A673 (cell line): ENCODE measurements at regions of chr11 and their contacts with region 1.

Region 1: DNA sequence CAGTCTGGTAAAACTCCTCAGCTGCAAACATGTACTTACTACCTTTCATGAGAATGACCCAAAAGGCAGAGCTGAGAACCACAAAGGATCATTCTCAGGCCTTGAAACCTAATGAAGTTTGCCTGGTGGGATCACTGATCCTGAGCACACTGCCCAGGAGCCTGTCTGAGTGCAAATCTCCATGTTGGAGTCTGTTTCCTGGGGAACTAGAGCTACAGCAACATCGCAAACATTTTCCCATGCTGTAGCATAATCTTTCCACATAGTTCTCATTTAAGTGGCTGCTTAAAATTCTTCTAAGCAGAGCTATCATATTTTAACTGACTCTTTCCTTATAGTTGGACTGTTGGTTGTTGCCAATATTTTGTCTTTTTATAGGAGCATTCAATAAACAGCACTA is 58.5 kb downstream of the GUCY1A2 start:
- DNase-seq: no peak
- H3K4me3 ChIP-seq: no peak overlapping the region
- H3K27ac ChIP-seq: peak overlapping the region; percentile 94
- H3K4me1 ChIP-seq: peaks cover 71% of the 10 kb centered on the region
- H3K27me3 ChIP-seq: no peaks in the 10 kb centered on the region
- CTCF ChIP-seq: no peak

Region 2: GRCh38 chr11:106632283-106632682 is 327.5 kb before region 1 on chr11:
- CTCF ChIA-PET with region 1: no interaction called
- POLR2A ChIA-PET with region 1: no interaction called
- intact Hi-C with region 1: no loop called
- DNase-seq: no peak
- H3K4me3 ChIP-seq: no peak overlapping the region
- H3K27ac ChIP-seq: no peak overlapping the region
- H3K4me1 ChIP-seq: no peaks in the 10 kb centered on the region
- H3K27me3 ChIP-seq: no peaks in the 10 kb centered on the region
- CTCF ChIP-seq: no peak

Region 3: GRCh38 chr11:106917973-106918372 is 41.8 kb before region 1 on chr11:
- CTCF ChIA-PET with region 1: no interaction called
- POLR2A ChIA-PET with region 1: no interaction called
- intact Hi-C with region 1: loop called (anchors 5 kb)
- DNase-seq: peak; percentile 63
- H3K4me3 ChIP-seq: no peak overlapping the region
- H3K27ac ChIP-seq: no peak overlapping the region
- H3K4me1 ChIP-seq: peaks cover 14% of the 10 kb centered on the region
- H3K27me3 ChIP-seq: no peaks in the 10 kb centered on the region
- CTCF ChIP-seq: peak; percentile 74

Region 4: GRCh38 chr11:106988151-106989077 is 28.6 kb after region 1 on chr11:
- CTCF ChIA-PET with region 1: interaction called, 5 read pairs
- POLR2A ChIA-PET with region 1: no interaction called
- intact Hi-C with region 1: loop called (anchors 2 kb)
- DNase-seq: peak; percentile 99
- H3K4me3 ChIP-seq: no peak overlapping the region
- H3K27ac ChIP-seq: peak overlapping the region; percentile 67
- H3K4me1 ChIP-seq: peaks cover 53% of the 10 kb centered on the region
- H3K27me3 ChIP-seq: no peaks in the 10 kb centered on the region
- CTCF ChIP-seq: no peak